Activated naive CD4-positive, alpha-beta T cell treated with anti-CD3 and anti-CD28 coated beads for 36 hours (primary cell): ENCODE measurements at regions of chr14 and their contacts with region 1.

Region 1: GRCh38 chr14:52402812-52403526 is 88.9 kb downstream of the PTGER2 start:
- DNase-seq: peak; percentile 77
- H3K4me3 Mint-ChIP-seq: no peak overlapping the region
- H3K27ac Mint-ChIP-seq: no peak overlapping the region
- H3K4me1 Mint-ChIP-seq: peaks cover 50% of the 10 kb centered on the region
- H3K27me3 Mint-ChIP-seq: peaks cover 4% of the 10 kb centered on the region

Region 2: DNA sequence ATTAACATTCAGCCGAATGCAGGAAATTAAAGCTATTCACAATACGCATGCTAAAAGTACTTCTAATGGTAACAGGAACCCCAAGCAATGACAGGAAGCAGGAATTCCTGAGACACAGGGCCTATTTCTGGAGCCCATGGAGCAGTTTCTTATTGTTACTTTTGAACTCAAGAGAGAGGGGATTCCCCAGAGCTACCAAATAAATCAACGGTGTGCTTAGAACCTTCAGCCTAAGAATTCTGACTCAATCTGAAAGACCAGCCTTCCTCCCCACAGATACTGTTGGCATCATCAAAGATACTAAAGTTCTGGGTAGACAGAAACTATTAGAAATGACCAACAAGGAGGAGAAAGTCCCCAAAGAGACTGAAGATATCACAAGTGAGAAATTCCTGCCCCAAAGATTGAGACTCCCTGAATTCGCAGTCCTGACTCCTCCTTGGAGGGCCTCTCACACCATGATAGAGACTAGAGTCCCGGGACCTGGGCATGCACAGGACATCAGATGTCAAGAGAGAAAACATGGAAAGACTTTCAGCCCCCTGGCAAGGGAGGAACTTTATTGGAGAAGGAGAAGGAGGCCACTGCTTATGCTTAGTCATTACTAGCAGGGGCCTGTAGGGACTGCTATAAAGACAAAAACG is 380.9 kb before region 1 on chr14:
- CTCF ChIA-PET with region 1: no interaction called
- intact Hi-C with region 1: loop called (anchors 5 kb)
- DNase-seq: peak; percentile 14
- H3K4me3 Mint-ChIP-seq: no peak overlapping the region
- H3K27ac Mint-ChIP-seq: no peak overlapping the region
- H3K4me1 Mint-ChIP-seq: peaks cover 42% of the 10 kb centered on the region
- H3K27me3 Mint-ChIP-seq: no peaks in the 10 kb centered on the region

Region 3: GRCh38 chr14:52313903-52314594 is 88.9 kb before region 1 on chr14 and contains the start of gene PTGER2:
- CTCF ChIA-PET with region 1: no interaction called
- intact Hi-C with region 1: loop called (anchors 2 kb)
- DNase-seq: peak; percentile 64
- H3K4me3 Mint-ChIP-seq: peak within 1 kb of the TSS; percentile 93
- H3K27ac Mint-ChIP-seq: peak within 1 kb of the TSS; percentile 79
- H3K4me1 Mint-ChIP-seq: peaks cover 56% of the 10 kb centered on the region
- H3K27me3 Mint-ChIP-seq: peaks cover 19% of the 10 kb centered on the region
- total RNA-seq, gene PTGER2: 0.67 to 1.2 TPM

Region 4: GRCh38 chr14:52351233-52352060 is 51.5 kb before region 1 on chr14:
- CTCF ChIA-PET with region 1: no interaction called
- intact Hi-C with region 1: loop called (anchors 1 kb)
- DNase-seq: no peak
- H3K4me3 Mint-ChIP-seq: no peak overlapping the region
- H3K27ac Mint-ChIP-seq: peak overlapping the region; percentile 43
- H3K4me1 Mint-ChIP-seq: peaks cover 52% of the 10 kb centered on the region
- H3K27me3 Mint-ChIP-seq: no peaks in the 10 kb centered on the region

Region 5: DNA sequence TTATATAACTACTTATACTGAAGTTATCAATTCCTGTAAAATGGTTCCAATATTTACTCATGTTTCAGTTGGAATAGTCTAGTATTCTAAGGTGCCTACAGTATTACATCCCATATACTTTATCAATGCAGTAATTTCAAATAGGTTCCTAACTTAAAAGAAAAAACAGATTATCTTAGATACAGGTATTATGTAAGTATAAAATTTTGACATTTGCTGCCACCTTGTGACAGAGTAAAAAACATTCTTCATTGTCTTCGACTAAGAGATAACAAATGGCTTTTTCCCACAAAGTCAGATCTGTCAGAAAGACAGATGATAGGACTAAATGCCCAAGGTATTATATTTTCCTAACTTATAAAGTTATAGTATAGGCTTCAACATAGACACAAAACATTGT is 70.6 kb after region 1 on chr14:
- CTCF ChIA-PET with region 1: no interaction called
- intact Hi-C with region 1: loop called (anchors 2 kb)
- DNase-seq: no peak
- H3K4me3 Mint-ChIP-seq: no peak overlapping the region
- H3K27ac Mint-ChIP-seq: no peak overlapping the region
- H3K4me1 Mint-ChIP-seq: peaks cover 4% of the 10 kb centered on the region
- H3K27me3 Mint-ChIP-seq: no peaks in the 10 kb centered on the region